ENCODE measurements at regions of chr4 and their contacts with region 1.

Region 1: DNA sequence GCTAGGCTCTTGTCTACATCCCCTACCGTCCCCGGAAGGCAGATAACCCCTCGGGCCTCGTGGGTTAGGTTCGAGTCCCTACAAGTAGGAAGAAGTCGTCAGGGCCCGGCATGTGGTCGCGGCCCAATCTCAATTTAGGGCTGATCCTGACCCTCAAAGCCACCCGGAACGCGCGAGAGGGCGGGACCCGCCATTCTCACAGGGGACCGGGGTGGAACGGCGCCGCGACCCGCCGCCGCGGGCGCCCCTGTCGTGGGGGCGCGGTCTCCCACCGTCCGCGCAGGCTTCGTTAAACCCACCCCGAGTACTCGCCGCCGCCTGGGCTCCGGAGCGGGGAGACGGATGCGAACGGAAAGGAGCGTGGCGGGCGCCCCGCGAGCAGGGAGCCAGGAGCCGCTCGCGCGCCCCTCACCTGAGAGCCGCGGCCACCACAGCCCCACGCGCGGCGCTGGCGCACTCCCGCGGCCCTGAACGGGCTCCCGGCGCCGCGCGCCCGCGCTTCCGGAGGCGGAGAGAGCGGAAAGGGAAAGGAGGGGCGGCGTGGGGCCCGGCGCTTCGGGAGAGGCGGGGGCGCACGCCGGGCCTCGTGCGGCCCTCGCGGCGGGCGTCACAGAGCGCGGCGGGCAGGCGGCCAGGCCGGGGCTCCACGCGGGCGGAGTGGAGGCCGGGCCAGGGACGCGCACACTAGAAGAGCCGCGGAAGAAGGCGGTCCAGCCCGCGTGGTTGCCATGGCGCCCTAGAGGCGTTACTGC is at the start of gene CFAP97:
- DNase-seq: peak; percentile 96
- H3K4me3 ChIP-seq: peak within 1 kb of the TSS; percentile 50 to 85 (median 72)
- H3K27ac ChIP-seq: peak within 1 kb of the TSS; percentile 94 to 98 (median 96)
- H3K4me1 ChIP-seq: peaks cover 0 to 29% (median 26%) of the 10 kb centered on the region in 4 donors
- H3K27me3 ChIP-seq: no peaks in the 10 kb centered on the region
- CTCF ChIP-seq: no peak
- EP300 ChIP-seq: no peak
- POLR2A ChIP-seq: peak in 1 of 2 donors; percentile 15
- total RNA-seq, gene CFAP97: 33.8 to 46.4 (median 37.3) TPM

Region 2: DNA sequence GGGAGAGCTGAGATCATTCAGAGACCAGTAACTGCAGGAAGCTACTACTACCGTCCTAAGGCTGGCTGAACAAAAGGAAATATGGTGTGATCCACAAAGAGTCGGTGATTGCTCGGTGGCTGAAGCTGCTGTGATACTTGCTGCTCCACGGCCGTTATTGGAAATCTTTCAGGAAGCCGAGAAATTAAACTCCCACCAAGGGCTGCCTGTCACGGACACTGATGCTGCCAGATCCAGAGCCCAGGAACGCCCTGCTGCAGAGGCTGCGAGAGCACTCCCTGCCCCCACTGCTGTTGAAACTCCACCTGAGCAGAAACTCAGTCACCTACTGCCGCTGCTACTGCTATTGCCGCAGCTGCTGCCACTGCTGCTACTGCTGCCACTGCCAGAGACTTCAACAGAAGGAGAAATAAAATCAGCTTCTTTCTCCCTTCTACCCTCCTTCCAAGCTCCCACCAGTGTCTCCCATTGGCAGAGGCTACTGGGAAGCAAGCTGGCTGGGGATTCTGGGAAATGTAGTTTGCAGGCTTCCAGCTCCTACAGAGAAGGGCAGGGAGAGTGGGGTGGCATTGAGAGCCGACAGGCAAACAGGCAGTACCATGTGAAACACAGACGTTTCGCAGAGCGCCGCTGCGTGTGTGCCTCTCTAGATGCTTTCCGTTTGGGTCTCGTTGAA is 860.0 kb before region 1 on chr4:
- intact Hi-C with region 1: no loop called
- DNase-seq: peak; percentile 88
- H3K4me3 ChIP-seq: peak overlapping the region; percentile 38 to 61 (median 56)
- H3K27ac ChIP-seq: peak overlapping the region; percentile 67 to 82 (median 76)
- H3K4me1 ChIP-seq: peaks cover 0 to 15% (median 4%) of the 10 kb centered on the region in 4 donors
- H3K27me3 ChIP-seq: no peaks in the 10 kb centered on the region
- CTCF ChIP-seq: no peak
- EP300 ChIP-seq: no peak
- POLR2A ChIP-seq: peak in 1 of 2 donors; percentile 44

Region 3: DNA sequence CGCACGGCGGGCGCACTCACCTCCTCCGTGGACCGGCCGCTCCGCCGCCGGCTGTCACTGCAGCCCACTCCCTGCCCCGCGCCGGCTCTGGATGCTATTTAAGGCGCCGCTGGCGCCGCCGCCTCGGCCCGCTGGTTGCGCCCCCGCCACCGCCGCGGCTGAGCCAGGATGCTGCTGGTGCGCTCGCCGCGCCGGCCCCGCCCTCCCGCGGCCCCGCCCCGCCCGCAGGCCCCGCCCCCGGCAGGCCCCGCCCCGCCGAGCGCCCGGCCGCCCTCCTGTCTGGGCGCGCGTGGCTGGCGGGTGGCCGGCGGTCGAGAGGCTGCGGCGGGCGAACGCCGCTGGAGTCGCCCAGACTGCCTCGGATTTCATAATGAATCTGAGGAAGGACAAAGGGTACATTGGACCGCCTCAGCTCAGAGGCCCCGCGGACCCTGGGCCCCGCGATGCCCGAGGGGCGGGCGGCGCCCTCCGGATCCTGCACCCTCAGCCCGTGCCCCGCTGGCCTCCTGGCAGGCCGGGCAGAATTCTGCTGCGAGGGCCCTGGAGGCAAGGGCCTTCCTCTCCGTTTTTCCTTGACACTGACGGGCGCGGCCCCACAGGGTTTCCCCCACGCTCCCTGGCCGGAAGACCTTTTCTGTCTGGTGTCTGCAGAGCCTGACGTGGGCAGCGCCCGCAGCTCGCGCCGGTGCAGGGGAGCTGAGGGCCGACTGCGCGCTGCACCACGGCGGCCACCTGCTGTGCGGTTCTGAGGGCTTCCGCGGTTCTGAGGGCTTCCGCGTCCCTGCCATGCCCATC is 377.6 kb before region 1 on chr4 and contains the start of gene ACSL1:
- intact Hi-C with region 1: loop called (anchors 10 kb)
- DNase-seq: peak; percentile 90
- H3K4me3 ChIP-seq: peak within 1 kb of the TSS; percentile 46 to 88 (median 65)
- H3K27ac ChIP-seq: peak within 1 kb of the TSS; percentile 80 to 91 (median 84)
- H3K4me1 ChIP-seq: peaks cover 0 to 22% (median 10%) of the 10 kb centered on the region in 4 donors
- H3K27me3 ChIP-seq: no peaks in the 10 kb centered on the region
- CTCF ChIP-seq: no peak
- EP300 ChIP-seq: no peak
- POLR2A ChIP-seq: no peak
- total RNA-seq, gene ACSL1: 37.8 to 118 (median 72.3) TPM

Region 4: DNA sequence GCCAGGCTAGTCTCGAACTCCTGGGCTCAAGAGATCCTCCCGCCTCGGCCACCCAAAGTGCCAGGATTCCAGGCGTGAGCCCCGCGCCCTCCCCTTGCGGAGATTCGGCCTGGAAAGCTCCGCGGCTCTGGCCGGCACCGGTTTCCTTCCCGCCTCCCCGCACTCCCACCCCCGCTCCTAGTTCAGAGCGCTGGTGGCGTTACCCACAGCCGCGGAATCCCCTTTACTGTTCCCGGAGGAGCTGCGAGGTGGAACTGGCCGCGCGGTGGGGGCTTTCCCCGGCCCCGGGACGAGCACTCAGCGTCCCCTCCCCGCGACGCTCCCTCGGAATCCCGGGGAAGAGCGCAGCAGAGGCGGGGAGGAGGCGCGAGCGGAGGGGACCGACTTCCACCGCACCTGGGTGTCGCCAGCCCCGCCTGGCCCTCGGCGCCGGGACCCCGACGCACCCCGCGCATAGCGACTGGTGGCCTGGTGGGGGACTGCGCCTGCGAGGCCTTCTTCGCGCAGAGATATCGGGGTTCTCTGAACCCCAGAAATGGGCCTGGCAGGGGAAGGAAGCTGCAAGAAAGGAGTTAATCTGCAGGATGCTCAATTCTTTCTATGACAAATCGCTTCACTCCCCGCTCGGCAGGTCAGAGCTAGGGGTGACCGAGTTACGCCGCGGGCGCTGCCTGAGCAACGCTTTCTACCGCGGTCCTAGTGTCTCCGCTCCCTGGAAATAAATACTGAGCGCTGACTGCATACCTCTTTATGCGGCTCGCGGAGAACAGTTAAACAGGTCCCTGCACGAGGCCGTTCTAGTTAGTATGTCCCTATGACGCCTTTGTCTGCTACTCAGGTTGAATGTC is 75.2 kb before region 1 on chr4:
- intact Hi-C with region 1: no loop called
- DNase-seq: no peak
- H3K4me3 ChIP-seq: peak overlapping the region; percentile 53 to 67 (median 58)
- H3K27ac ChIP-seq: peak overlapping the region; percentile 11 to 89 (median 53)
- H3K4me1 ChIP-seq: peaks cover 0 to 23% (median 14%) of the 10 kb centered on the region in 4 donors
- H3K27me3 ChIP-seq: no peaks in the 10 kb centered on the region
- CTCF ChIP-seq: no peak
- EP300 ChIP-seq: no peak
- POLR2A ChIP-seq: no peak

Region 5: DNA sequence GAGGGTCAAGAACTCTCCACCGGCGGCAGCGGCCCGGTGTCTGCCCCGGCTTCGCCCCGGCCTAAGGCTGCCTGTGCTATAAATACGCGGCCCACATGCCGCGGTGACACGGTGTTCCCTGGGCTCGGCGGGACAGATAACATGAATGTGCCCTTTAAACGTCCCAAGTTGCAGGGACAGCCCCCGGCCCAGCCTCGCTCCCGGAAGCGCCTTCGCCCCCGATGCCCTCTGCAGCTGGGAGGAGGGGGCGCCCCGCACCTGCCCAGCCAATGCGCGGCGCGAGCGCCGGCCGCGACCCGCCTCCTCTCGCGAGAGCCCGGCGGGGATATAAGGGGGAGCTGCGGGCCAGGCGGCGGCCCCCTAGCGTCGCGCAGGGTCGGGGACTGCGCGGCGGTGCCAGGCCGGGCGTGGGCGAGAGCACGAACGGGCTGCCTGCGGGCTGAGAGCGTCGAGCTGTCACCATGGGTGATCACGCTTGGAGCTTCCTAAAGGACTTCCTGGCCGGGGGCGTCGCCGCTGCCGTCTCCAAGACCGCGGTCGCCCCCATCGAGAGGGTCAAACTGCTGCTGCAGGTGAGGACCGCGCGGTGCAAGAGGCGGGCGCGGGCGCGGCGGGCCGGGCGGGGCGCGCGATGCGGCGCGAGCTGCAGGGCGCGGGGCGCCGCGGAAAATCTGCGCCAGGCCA is 60.6 kb before region 1 on chr4 and contains the start of gene SLC25A4:
- intact Hi-C with region 1: loop called (anchors 2 kb)
- DNase-seq: peak; percentile 94
- H3K4me3 ChIP-seq: peak within 1 kb of the TSS; percentile 60 to 81 (median 78)
- H3K27ac ChIP-seq: peak within 1 kb of the TSS; percentile 88 to 98 (median 94)
- H3K4me1 ChIP-seq: peaks cover 0 to 41% (median 34%) of the 10 kb centered on the region in 4 donors
- H3K27me3 ChIP-seq: no peaks in the 10 kb centered on the region
- CTCF ChIP-seq: peak in 3 of 4 experiments; percentile 15 to 57 (median 50)
- EP300 ChIP-seq: peak in 1 of 4 donors; percentile 7
- POLR2A ChIP-seq: peak; percentile 62
- total RNA-seq, gene SLC25A4: 89.1 to 127 (median 112) TPM

Region 6: DNA sequence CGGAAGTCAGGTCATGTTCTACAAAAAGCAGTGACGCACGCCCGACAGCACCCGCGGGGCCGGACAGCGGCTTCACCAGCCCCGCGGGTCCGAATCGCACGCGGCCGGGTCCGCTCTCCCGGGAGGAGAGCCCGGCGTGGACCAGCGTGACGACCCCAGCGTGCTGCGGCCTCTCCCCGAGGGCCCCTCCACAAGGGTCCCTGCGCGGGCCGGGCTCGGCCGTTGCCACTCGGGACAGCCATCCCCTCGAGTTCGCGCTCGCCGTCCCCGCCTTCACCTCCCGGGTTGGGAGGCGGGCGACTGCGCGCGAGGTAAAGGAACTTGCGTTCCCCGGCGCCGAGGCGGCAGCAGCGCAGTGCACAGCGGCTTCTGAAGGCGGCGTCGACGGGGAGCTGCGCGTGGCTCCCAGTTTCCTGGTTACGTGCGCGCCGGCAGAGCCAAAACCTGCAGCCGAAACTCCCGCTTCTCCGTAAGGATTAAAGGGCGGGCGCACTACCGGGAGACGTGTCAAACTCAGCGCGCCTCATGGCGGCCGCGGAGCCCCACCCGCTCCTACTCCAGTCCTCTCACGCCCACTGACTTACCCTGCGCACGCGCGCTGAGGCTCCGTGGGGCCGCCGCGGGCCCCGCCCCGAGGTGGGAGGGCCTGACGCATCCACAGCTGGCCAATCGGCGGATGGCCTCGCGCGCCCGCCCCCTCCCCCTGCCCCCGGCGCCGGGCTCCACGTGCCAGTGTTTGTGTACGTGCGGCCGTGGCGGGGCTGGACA is 192.5 kb after region 1 on chr4:
- intact Hi-C with region 1: loop called (anchors 2 kb)
- DNase-seq: peak; percentile 99
- H3K4me3 ChIP-seq: peak overlapping the region; percentile 55 to 80 (median 72)
- H3K27ac ChIP-seq: peak overlapping the region; percentile 94 to 100 (median 98)
- H3K4me1 ChIP-seq: peaks cover 0 to 38% (median 11%) of the 10 kb centered on the region in 4 donors
- H3K27me3 ChIP-seq: no peaks in the 10 kb centered on the region
- CTCF ChIP-seq: no peak
- EP300 ChIP-seq: peak in 3 of 4 donors; percentile 70 to 94 (median 85)
- POLR2A ChIP-seq: peak; percentile 59 to 65

Region 7: GRCh38 chr4:185471235-185472102 is 267.8 kb after region 1 on chr4 and contains the start of gene CCDC110:
- intact Hi-C with region 1: loop called (anchors 2 kb)
- DNase-seq: peak; percentile 99
- H3K4me3 ChIP-seq: peak within 1 kb of the TSS; percentile 52 to 95 (median 78)
- H3K27ac ChIP-seq: peak within 1 kb of the TSS; percentile 73 to 81 (median 77)
- H3K4me1 ChIP-seq: peaks cover 0 to 14% (median 7%) of the 10 kb centered on the region in 4 donors
- H3K27me3 ChIP-seq: no peaks in the 10 kb centered on the region
- CTCF ChIP-seq: peak; percentile 25 to 77 (median 46)
- EP300 ChIP-seq: no peak
- POLR2A ChIP-seq: no peak
- total RNA-seq, gene CCDC110: 1.6 to 9.3 (median 7.2) TPM

Region 8: DNA sequence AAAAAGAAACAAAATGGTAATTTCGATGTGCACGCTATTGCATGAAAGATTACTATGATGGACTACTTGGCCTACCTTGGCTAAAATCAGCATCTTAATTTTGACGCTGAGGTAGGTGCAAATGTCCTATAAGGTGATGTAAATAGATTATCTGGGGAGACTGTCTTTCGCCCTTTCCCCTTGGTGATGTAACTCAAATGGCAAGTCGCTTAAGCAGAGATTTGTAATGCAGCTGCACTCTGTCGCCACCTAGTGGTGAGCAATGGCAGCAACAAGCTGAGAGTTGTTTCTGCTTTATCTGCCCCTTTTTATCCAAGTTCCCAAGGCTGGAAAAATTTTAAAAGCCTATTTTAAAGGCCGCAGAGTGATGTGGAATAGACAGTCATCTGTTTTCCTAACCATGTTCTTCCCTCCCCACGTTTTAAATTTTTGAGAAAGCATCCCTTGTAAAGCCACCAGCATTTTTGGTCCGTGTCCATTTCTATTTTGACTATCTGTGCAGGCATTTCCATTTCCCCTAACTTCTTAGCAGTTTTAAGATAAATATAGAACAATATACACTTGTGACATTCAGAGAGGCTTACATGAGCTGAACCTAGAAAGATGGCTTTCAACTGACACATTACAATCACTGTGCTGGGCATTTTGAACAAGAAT is 394.0 kb after region 1 on chr4:
- intact Hi-C with region 1: loop called (anchors 10 kb)
- DNase-seq: peak; percentile 89
- H3K4me3 ChIP-seq: no peak overlapping the region
- H3K27ac ChIP-seq: peak overlapping the region; percentile 44 to 82 (median 76)
- H3K4me1 ChIP-seq: peaks cover 0 to 36% (median 25%) of the 10 kb centered on the region in 4 donors
- H3K27me3 ChIP-seq: no peaks in the 10 kb centered on the region
- CTCF ChIP-seq: peak; percentile 97 to 99 (median 98)
- EP300 ChIP-seq: no peak
- POLR2A ChIP-seq: no peak

Region 9: DNA sequence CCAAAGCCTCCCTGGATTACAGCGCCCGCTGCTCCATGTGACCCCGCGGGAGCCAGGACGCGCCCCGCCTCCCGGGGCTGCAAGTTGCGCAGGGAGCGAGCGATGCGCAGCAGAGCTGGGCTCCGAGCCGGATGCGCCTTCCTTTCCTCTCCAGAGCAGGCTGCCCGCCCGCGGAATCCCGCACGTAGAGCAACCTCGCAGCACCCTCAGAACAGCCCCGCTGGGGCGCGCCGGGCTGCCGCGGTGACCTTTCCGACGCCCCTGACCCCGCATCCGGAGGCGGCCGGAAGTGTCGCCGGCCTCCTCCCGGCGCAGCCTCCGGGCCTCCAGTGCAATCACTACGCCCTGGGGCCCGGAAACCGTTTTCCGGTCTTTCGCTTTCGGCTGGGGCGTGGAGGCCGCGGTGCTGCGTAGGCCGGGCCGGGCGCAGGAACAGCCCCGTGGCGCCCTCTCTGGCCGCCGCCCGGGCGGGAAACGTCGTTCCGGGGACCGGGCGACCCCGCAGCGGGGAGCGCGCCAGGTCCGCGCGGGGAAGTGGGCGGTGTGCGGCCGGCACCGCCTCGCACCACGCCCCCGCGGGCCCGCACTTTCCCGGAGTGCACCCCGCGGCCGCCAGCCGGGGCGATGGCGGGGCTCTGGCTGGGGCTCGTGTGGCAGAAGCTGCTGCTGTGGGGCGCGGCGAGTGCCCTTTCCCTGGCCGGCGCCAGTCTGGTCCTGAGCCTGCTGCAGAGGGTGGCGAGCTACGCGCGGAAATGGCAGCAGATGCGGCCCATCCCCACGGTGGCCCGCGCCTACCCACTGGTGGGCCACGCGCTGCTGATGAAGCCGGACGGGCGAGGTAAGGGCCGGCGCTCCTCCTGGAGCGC is 987.8 kb after region 1 on chr4 and contains the start of gene CYP4V2:
- intact Hi-C with region 1: loop called (anchors 5 kb)
- DNase-seq: peak; percentile 91
- H3K4me3 ChIP-seq: peak within 1 kb of the TSS; percentile 79 to 89 (median 82)
- H3K27ac ChIP-seq: peak within 1 kb of the TSS; percentile 93 to 99 (median 98)
- H3K4me1 ChIP-seq: peaks cover 0 to 40% (median 31%) of the 10 kb centered on the region in 4 donors
- H3K27me3 ChIP-seq: no peaks in the 10 kb centered on the region
- CTCF ChIP-seq: peak in 1 of 4 experiments; percentile 6
- EP300 ChIP-seq: peak in 1 of 4 donors; percentile 4
- POLR2A ChIP-seq: peak; percentile 46 to 67
- total RNA-seq, gene CYP4V2: 30.0 to 75.3 (median 34.7) TPM

Measured in sigmoid colon (tissue), 7 donors.